ENCODE measurements at regions of chr11 and their contacts with region 1.

Region 1: GRCh38 chr11:65418711-65419459 is 3.7 kb upstream of the NEAT1 start:
- DNase-seq: peak; percentile 88
- H3K4me3 Mint-ChIP-seq: peak overlapping the region; percentile 99
- H3K27ac Mint-ChIP-seq: peak overlapping the region; percentile 100
- H3K4me1 Mint-ChIP-seq: peaks cover 57% of the 10 kb centered on the region
- H3K27me3 Mint-ChIP-seq: peaks cover 9% of the 10 kb centered on the region

Region 2: GRCh38 chr11:65366340-65366773 is 52.5 kb before region 1 on chr11:
- intact Hi-C with region 1: loop called (anchors 1 kb)
- DNase-seq: no peak
- H3K4me3 Mint-ChIP-seq: no peak overlapping the region
- H3K27ac Mint-ChIP-seq: no peak overlapping the region
- H3K4me1 Mint-ChIP-seq: no peaks in the 10 kb centered on the region
- H3K27me3 Mint-ChIP-seq: no peaks in the 10 kb centered on the region

Region 3: GRCh38 chr11:65454696-65455456 is 36.0 kb after region 1 on chr11:
- intact Hi-C with region 1: loop called (anchors 1 kb)
- DNase-seq: peak; percentile 82
- H3K4me3 Mint-ChIP-seq: peak overlapping the region; percentile 95
- H3K27ac Mint-ChIP-seq: peak overlapping the region; percentile 81
- H3K4me1 Mint-ChIP-seq: peaks cover 36% of the 10 kb centered on the region
- H3K27me3 Mint-ChIP-seq: peaks cover 2% of the 10 kb centered on the region

Region 4: DNA sequence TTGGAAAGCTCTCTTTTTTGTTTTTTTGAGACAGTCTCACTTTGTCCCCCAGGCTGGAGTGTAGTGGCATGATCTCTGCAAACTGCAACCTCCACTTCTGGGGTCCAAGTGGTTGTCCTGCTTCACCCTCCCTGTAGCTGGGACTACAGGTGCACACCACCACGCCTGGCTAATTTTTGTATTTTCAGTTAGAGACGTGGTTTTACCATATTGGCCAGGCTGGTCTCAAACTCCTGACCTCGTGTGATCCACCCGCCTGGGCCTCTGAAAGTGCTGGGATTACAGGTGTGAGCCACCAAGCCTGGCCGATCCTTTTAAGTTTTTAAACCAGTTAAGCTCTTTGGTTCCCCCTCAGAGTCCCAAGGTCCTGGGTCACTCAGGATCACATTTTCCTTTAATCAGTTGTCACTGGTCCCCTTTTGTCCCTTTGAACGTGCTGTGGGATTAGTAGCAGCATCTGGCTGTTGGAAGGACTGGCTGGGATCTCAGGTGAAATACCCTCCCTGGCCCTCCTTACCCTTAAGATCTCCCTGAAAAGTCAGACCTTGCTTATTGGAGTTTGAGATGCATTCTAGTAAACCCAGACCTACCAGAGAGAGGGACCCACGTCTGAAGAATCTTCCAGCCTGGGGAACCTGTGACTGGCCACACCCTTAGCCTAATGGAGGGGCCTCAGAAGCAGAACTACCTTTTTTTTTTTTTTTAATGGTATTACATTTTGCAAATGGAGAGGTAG is 88.1 kb after region 1 on chr11:
- intact Hi-C with region 1: loop called (anchors 1 kb)
- DNase-seq: peak; percentile 31
- H3K4me3 Mint-ChIP-seq: no peak overlapping the region
- H3K27ac Mint-ChIP-seq: peak overlapping the region; percentile 72
- H3K4me1 Mint-ChIP-seq: peaks cover 56% of the 10 kb centered on the region
- H3K27me3 Mint-ChIP-seq: no peaks in the 10 kb centered on the region

Measured in activated T-helper 1 cell treated with anti-CD3 and anti-CD28 coated beads, Interleukin-12 subunit alpha, Interleukin-12 subunit beta, Interleukin-2, Interleukin-4 antibody, amounts not matched to agents 30 ng/mL and 10 ng/mL and 1 ng/mL, durations not matched to agents 14 hours and 24 hours and 36 hours (primary cell).